Heart right ventricle (tissue), 16 donors: ENCODE measurements at regions of chr3 and their contacts with region 1.

Region 1: DNA sequence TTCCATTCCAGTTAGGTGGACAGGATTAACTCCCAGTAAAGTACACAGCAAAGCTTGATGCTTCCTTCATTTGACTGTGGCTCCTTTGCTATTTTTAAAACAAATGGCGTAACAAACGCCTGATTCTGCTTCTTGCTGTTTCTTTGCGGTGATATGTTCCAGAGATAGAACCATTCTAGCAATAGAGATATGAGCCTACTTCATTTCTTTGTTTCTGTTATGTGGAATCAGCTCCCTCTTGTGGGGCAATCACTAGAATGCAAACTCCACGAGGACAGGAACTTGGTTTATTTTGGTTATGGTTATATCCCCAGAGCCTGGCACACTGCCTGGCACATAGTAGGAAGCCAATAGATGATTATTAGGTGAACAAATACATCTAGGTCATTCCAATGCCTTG is 122.6 kb upstream of the SLC6A11 start:
- DNase-seq: no peak
- ATAC-seq: peak in 1 of 8 donors; percentile 34
- H3K4me3 ChIP-seq: no peak overlapping the region
- H3K27ac ChIP-seq: no peak overlapping the region
- H3K4me1 ChIP-seq: no peaks in the 10 kb centered on the region
- H3K27me3 ChIP-seq: peaks cover 0 to 26% (median 15%) of the 10 kb centered on the region in 7 donors
- CTCF ChIP-seq: peak in 7 of 9 donors; percentile 21 to 44 (median 36)

Region 2: DNA sequence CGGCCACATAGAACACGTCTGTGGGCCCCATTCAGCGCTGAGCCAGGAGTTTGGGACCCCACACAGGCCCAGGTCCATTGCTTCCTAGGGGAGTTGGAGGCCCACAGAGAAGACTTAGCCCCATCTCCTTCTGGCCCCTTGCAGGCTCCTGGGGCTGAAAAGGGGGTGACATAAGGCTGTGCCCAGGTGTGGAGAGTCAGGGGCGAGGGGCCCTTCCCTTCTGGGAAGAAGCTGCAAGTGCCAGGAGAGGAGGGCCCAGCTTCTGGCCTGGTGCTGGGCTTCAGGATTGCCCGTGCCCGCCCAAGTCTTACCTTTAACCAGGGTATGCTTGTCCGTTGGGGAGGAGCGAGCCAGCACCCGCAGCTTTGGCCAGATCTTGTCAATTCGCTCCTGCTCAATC is 343.7 kb before region 1 on chr3:
- intact Hi-C with region 1: loop called in 4 of 10 experiments (anchors 5 to 10 kb)
- DNase-seq: no peak
- ATAC-seq: no peak
- H3K4me3 ChIP-seq: no peak overlapping the region
- H3K27ac ChIP-seq: no peak overlapping the region
- H3K4me1 ChIP-seq: peaks cover 0 to 16% (median 9%) of the 10 kb centered on the region in 9 donors
- H3K27me3 ChIP-seq: peaks cover 0 to 7% (median 0%) of the 10 kb centered on the region in 7 donors
- CTCF ChIP-seq: no peak

Region 3: DNA sequence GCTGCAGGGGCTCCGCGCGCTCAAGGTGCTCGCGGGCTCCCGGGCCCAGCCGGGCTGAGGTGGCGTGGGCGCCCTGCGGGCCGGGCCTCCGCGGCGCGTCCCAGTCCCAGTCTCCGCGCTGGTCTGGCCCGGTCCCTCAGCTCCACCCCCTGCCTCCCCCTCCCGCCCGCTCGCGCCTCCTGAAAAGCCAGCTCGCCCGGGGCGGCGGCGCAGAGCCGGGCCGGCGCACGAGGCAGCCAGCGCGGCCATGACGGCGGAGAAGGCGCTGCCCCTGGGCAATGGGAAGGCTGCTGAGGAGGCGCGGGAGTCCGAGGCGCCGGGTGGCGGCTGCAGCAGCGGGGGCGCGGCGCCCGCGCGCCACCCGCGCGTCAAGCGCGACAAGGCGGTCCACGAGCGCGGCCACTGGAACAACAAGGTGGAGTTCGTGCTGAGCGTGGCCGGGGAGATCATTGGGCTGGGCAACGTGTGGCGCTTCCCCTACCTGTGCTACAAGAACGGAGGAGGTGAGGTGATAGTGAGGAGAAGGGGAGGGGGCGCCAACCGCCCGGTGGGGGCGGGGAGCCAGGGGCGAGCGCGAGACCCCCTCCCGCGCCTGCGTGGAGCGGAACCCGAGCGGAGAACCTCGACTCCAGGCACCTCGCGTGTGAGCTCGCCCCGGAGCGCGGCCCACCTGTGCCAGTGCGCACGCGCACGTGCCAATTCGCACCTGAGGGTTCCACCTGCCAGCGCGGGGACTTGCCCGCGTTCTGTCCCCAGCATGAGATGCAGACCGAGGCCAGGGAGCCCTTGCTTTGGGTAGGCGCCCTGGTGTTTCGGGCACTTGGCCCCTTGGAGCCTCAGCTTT is 122.8 kb after region 1 on chr3 and contains the start of gene SLC6A11:
- intact Hi-C with region 1: no loop called
- DNase-seq: no peak
- ATAC-seq: peak in 3 of 8 donors; percentile 29 to 59 (median 57)
- H3K4me3 ChIP-seq: peak within 1 kb of the TSS in 9 of 10 donors; percentile 5 to 34 (median 21)
- H3K27ac ChIP-seq: no peak within 1 kb of the TSS
- H3K4me1 ChIP-seq: peaks cover 0 to 8% (median 0%) of the 10 kb centered on the region in 9 donors
- H3K27me3 ChIP-seq: peaks cover 4 to 62% (median 52%) of the 10 kb centered on the region in 7 donors
- CTCF ChIP-seq: no peak
- total RNA-seq, gene SLC6A11: 0.05 TPM in 1 of 10 donors, not detected in the others